Gastrocnemius medialis (tissue), 4 donors: ENCODE measurements at regions of chr6 and their contacts with region 1.

Region 1: GRCh38 chr6:163956571-163957407 is 542.3 kb downstream of the QKI start:
- DNase-seq: peak; percentile 78 to 91
- ATAC-seq: peak; percentile 88 to 96
- H3K4me3 ChIP-seq: peak overlapping the region in 1 of 4 donors; percentile 23
- H3K27ac ChIP-seq: peak overlapping the region; percentile 78 to 99 (median 92)
- H3K4me1 ChIP-seq: peaks cover 38 to 52% of the 10 kb centered on the region in 2 donors
- H3K27me3 ChIP-seq: no peaks in the 10 kb centered on the region
- CTCF ChIP-seq: peak; percentile 94 to 96 (median 95)
- POLR2A ChIP-seq: no peak

Region 2: GRCh38 chr6:163291622-163292021 is 665.2 kb before region 1 on chr6:
- in situ Hi-C with region 1: no loop called
- intact Hi-C with region 1: loop called (anchors 5 kb)
- DNase-seq: no peak
- ATAC-seq: no peak
- H3K4me3 ChIP-seq: no peak overlapping the region
- H3K27ac ChIP-seq: peak overlapping the region; percentile 81 to 85 (median 84)
- H3K4me1 ChIP-seq: peaks cover 10 to 13% of the 10 kb centered on the region in 2 donors
- H3K27me3 ChIP-seq: no peaks in the 10 kb centered on the region
- CTCF ChIP-seq: no peak
- POLR2A ChIP-seq: no peak

Region 3: GRCh38 chr6:163347021-163347446 is 609.8 kb before region 1 on chr6:
- in situ Hi-C with region 1: no loop called
- intact Hi-C with region 1: loop called (anchors 5 kb)
- DNase-seq: peak in 1 of 2 donors; percentile 69
- ATAC-seq: peak; percentile 55 to 69
- H3K4me3 ChIP-seq: peak overlapping the region; percentile 38 to 45 (median 44)
- H3K27ac ChIP-seq: peak overlapping the region; percentile 73 to 93 (median 86)
- H3K4me1 ChIP-seq: peaks cover 16 to 26% of the 10 kb centered on the region in 2 donors
- H3K27me3 ChIP-seq: no peaks in the 10 kb centered on the region
- CTCF ChIP-seq: no peak
- POLR2A ChIP-seq: peak in 1 of 2 donors; percentile 48

Region 4: GRCh38 chr6:163427498-163428254 is 529.1 kb before region 1 on chr6:
- in situ Hi-C with region 1: loop called (anchors 5 to 10 kb)
- intact Hi-C with region 1: loop called (anchors 2 kb)
- DNase-seq: no peak
- ATAC-seq: peak; percentile 62 to 68
- H3K4me3 ChIP-seq: peak overlapping the region in 3 of 4 donors; percentile 13 to 26 (median 17)
- H3K27ac ChIP-seq: peak overlapping the region; percentile 98 to 99 (median 99)
- H3K4me1 ChIP-seq: peaks cover 96 to 100% of the 10 kb centered on the region in 2 donors
- H3K27me3 ChIP-seq: no peaks in the 10 kb centered on the region
- CTCF ChIP-seq: peak in 4 of 5 experiments; percentile 33 to 83 (median 44)
- POLR2A ChIP-seq: no peak

Region 5: GRCh38 chr6:163585932-163586437 is 370.8 kb before region 1 on chr6:
- in situ Hi-C with region 1: loop called (anchors 5 to 25 kb)
- intact Hi-C with region 1: loop called (anchors 2 kb)
- DNase-seq: peak; percentile 87 to 93
- ATAC-seq: peak; percentile 85 to 88
- H3K4me3 ChIP-seq: peak overlapping the region in 3 of 4 donors; percentile 14 to 24 (median 24)
- H3K27ac ChIP-seq: peak overlapping the region; percentile 81 to 88 (median 86)
- H3K4me1 ChIP-seq: peaks cover 43 to 55% of the 10 kb centered on the region in 2 donors
- H3K27me3 ChIP-seq: no peaks in the 10 kb centered on the region
- CTCF ChIP-seq: no peak
- POLR2A ChIP-seq: peak; percentile 39 to 52

Region 6: GRCh38 chr6:163661272-163661671 is 295.5 kb before region 1 on chr6:
- in situ Hi-C with region 1: no loop called
- intact Hi-C with region 1: loop called (anchors 5 kb)
- DNase-seq: no peak
- ATAC-seq: peak in 1 of 2 donors; percentile 4
- H3K4me3 ChIP-seq: no peak overlapping the region
- H3K27ac ChIP-seq: no peak overlapping the region
- H3K4me1 ChIP-seq: peaks cover 17 to 23% of the 10 kb centered on the region in 2 donors
- H3K27me3 ChIP-seq: no peaks in the 10 kb centered on the region
- CTCF ChIP-seq: no peak
- POLR2A ChIP-seq: no peak

Region 7: DNA sequence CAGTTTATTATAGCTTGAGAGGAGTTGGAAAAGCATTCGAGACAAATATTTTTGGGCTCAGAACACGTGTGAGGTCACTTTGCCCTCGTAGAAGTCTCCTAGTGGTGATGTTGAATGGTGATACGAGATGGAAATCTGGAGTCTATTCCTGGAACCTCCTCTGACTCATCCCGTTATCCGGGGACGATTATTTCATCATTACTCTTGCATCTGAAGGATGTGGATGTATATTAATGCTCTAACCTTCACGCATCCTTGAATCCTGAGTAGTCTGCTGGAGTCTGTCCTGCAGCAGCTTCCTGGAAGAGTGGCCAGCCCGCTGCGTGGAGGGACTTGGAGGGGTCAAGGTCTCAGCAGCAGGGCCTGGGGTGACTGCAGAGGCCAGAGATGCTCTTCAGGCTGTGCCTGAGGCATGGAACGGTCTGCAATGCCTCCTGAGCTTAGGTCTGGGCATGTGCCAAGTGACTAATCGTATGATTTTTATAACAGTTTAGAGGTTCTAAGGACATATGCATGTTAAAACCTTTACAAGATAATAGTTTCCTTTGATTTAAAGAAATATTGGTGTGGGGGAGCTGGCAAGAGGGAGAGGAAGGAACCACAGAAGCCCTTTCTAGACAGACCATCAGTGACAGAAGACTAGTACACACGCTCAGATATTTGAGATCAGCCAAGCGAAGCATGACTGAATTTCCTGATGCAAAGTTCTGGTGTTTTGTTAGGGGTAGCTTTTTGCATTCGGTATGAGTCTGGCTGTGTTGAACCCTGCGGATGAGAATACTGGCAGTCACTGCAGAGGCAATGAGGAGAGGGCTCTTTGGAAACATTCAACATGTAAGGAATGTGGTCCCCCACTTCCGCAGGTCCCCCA is 142.1 kb before region 1 on chr6:
- in situ Hi-C with region 1: no loop called
- intact Hi-C with region 1: loop called (anchors 1 kb)
- DNase-seq: peak; percentile 22 to 48
- ATAC-seq: peak; percentile 97 to 99
- H3K4me3 ChIP-seq: no peak overlapping the region
- H3K27ac ChIP-seq: peak overlapping the region; percentile 76 to 87 (median 84)
- H3K4me1 ChIP-seq: peaks cover 19 to 20% of the 10 kb centered on the region in 2 donors
- H3K27me3 ChIP-seq: no peaks in the 10 kb centered on the region
- CTCF ChIP-seq: peak; percentile 40 to 55 (median 48)
- POLR2A ChIP-seq: no peak

Region 8: DNA sequence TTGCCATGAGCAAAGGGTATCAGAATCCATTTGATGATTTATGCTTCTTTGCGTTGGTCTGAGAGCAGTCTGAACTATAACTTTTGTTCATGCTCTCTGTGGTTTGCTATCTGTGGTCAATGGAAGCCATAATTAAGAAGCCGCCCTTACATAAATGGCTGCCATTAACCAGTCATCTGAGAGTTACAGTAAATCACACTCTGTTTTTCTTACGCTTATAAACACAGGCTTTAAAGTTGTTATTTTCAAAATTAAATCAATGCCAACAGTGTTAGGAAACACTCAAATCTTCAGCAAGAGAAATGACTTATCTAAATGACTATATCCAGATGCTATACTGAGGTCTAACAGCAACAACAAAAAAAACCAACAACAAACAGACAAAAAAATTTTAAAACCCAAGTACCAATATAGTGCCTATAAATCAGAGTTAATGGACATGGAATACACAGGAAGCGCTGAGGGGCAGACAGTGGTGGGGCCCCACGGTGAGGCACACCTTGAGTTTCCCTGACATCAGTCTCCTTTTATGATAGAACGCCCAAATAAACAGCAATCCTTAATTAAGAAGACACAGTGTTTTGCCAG is 1460.6 kb after region 1 on chr6:
- in situ Hi-C with region 1: no loop called
- intact Hi-C with region 1: no loop called
- DNase-seq: no peak
- ATAC-seq: no peak
- H3K4me3 ChIP-seq: no peak overlapping the region
- H3K27ac ChIP-seq: no peak overlapping the region
- H3K4me1 ChIP-seq: no peaks in the 10 kb centered on the region
- H3K27me3 ChIP-seq: no peaks in the 10 kb centered on the region
- CTCF ChIP-seq: no peak
- POLR2A ChIP-seq: no peak